Esophagus muscularis mucosa (tissue), 4 donors: ENCODE measurements at regions of chr15 and their contacts with region 1.

Region 1: GRCh38 chr15:78449220-78449999 is 11.4 kb downstream of the IREB2 start:
- DNase-seq: no peak
- H3K4me3 ChIP-seq: no peak overlapping the region
- H3K27ac ChIP-seq: peak overlapping the region in 1 of 4 donors; percentile 7
- H3K4me1 ChIP-seq: peaks cover 19 to 72% (median 56%) of the 10 kb centered on the region in 4 donors
- H3K27me3 ChIP-seq: no peaks in the 10 kb centered on the region
- CTCF ChIP-seq: no peak
- EP300 ChIP-seq: no peak
- POLR2A ChIP-seq: no peak

Region 2: DNA sequence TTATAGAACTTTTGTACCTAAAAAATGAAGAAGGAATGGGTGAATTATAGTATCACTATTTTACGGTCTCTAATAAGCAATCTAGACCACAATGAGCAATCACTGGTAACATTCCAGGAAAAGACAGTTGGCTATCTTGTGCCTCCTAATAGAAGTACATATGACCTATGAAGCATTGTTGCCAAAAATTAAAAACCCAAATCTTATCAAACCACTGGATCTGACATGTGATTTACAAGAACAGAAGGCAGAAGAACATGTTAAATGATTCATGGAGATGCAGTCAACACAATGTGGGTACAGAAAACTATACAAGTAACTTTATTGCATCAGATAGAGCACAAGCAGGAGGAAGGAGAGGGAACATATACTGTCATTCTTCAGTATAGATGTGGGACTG is 43.5 kb after region 1 on chr15:
- intact Hi-C with region 1: loop called (anchors 10 kb)
- DNase-seq: no peak
- H3K4me3 ChIP-seq: no peak overlapping the region
- H3K27ac ChIP-seq: no peak overlapping the region
- H3K4me1 ChIP-seq: peaks cover 0 to 4% (median 0%) of the 10 kb centered on the region in 4 donors
- H3K27me3 ChIP-seq: no peaks in the 10 kb centered on the region
- CTCF ChIP-seq: no peak
- EP300 ChIP-seq: no peak
- POLR2A ChIP-seq: no peak